ENCODE measurements at regions of chr21 and their contacts with region 1.

Region 1: DNA sequence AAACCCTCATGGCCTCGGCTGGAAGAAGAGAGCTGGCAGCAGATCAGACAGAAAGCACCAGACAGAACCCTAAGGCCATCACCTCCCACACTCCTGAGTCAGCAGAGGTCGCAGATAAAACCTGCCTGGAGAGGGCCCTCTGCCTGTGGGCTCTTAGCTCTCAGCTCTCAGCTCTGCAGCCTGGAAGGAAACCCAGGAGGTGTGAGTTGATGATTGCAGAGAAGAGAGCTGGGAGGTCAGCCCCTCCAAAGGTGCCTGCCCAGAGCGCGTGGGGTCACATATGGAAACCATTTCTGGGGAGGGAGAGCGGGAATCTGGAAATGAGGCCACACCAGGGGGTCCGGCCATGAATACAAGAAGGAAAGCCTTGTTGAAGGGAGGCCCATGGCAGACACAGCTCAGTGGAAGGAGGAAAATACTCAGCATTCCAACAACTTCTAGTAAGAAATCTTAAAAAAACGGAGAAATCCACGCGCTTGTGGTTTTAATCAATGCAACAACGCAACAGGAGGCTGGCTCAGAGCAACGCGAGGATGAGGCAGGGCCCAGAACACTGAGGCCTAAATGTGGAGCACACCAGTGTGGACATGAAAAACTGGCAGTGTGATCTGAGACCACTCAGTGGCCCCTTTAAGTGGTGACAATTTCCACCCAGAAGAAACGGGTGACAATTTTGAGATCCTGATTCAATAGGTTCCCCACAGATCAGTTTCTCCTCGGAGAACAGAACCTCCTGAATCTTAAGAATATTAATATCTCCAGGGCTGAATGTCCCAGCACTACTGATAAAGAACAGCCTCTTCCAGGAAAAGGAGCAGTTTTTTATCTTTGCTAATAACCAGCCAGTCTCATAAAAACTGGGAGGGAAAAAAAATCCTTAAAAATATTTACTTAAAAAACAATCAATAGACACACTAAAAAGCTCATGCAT is 45.7 kb downstream of the PSMG1 start:
- DNase-seq: no peak
- H3K4me3 Mint-ChIP-seq: no peak overlapping the region
- H3K27ac Mint-ChIP-seq: no peak overlapping the region
- H3K4me1 Mint-ChIP-seq: peaks cover 7% of the 10 kb centered on the region
- H3K27me3 Mint-ChIP-seq: peaks cover 1% of the 10 kb centered on the region

Region 2: DNA sequence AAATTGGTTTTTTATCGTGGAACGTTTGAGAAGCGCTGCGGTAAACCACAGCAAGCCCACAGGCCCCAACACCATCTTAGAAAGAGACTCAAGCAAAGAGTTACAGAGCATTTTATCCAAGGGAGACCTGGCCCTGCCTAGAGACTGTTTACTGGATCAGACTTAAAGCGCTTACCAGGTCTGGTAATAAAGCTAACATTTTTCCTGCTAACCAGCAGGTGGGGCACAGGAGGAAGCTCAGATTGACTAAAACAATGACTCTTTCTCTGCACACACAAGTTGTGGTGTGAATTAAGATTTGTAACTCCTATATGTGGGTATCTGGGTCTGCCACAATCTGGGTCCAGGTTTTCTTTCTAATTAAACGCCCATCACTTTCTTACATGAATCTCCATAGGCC is 468.3 kb before region 1 on chr21:
- intact Hi-C with region 1: loop called (anchors 10 kb)
- DNase-seq: no peak
- H3K4me3 Mint-ChIP-seq: no peak overlapping the region
- H3K27ac Mint-ChIP-seq: no peak overlapping the region
- H3K4me1 Mint-ChIP-seq: no peaks in the 10 kb centered on the region
- H3K27me3 Mint-ChIP-seq: peaks cover 30% of the 10 kb centered on the region

Region 3: GRCh38 chr21:39441502-39442475 is 304.3 kb after region 1 on chr21:
- intact Hi-C with region 1: no loop called
- DNase-seq: no peak
- H3K4me3 Mint-ChIP-seq: no peak overlapping the region
- H3K27ac Mint-ChIP-seq: no peak overlapping the region
- H3K4me1 Mint-ChIP-seq: peaks cover 12% of the 10 kb centered on the region
- H3K27me3 Mint-ChIP-seq: peaks cover 41% of the 10 kb centered on the region

Region 4: DNA sequence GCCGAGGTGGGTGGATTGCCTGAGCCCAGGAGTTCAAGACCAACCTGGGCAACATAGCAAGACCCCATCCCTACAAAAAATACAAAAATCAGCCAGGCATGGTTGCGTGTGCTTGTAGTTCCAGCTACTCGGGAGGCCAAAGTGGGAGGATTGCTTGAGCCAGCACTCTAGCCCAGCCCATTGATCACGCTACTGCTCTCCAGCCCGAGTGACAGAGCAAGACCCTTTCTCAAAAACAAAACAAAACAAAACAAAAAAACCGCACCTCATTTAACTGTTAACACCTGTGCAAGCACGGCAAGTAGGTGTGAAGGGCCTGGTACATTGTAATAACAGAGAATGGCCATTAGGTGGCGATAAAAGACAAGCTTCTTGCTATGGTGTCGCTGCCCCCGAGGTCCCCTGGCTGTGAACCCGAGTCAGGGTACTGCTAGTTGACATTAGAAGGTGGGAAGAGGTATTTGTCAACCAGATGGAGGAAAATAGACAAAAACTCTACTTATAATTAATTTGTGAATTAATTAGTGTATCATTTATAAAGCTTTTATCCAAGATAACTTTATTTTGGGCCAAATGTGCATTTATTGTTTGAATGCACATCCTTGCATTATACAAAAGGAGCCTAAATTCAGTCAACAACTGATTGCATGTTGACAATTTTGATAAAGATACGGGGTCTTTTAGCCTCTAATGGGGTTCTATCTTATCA is 380.8 kb after region 1 on chr21:
- intact Hi-C with region 1: no loop called
- DNase-seq: peak; percentile 15
- H3K4me3 Mint-ChIP-seq: no peak overlapping the region
- H3K27ac Mint-ChIP-seq: no peak overlapping the region
- H3K4me1 Mint-ChIP-seq: no peaks in the 10 kb centered on the region
- H3K27me3 Mint-ChIP-seq: no peaks in the 10 kb centered on the region